ENCODE measurements at regions of chr2 and their contacts with region 1.

Region 1: DNA sequence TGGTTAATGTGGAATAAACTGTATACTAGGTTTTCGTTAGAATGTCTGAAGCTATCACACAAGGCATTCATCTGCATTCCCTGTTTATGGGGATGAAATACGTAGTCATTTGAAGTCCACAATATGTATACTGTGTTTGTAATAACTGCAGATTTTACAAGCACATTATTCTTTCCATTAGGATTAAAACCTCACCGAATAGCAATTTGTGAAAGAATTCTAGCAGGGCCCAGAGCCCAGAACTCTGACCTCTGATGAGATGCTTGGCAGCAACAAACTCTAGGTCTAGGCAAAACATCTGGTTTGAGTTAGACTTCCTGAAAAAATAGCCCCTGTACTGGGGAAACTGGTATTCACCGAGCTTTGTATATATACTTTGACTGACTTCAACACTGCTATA is 158.2 kb downstream of the SRBD1 start:
- DNase-seq: no peak
- ATAC-seq: no peak
- H3K4me3 ChIP-seq: no peak overlapping the region
- H3K27ac ChIP-seq: no peak overlapping the region
- H3K4me1 ChIP-seq: no peaks in the 10 kb centered on the region
- H3K27me3 ChIP-seq: no peaks in the 10 kb centered on the region
- CTCF ChIP-seq: no peak
- EP300 ChIP-seq: no peak
- POLR2A ChIP-seq: no peak
- RAD21 ChIP-seq: no peak

Region 2: DNA sequence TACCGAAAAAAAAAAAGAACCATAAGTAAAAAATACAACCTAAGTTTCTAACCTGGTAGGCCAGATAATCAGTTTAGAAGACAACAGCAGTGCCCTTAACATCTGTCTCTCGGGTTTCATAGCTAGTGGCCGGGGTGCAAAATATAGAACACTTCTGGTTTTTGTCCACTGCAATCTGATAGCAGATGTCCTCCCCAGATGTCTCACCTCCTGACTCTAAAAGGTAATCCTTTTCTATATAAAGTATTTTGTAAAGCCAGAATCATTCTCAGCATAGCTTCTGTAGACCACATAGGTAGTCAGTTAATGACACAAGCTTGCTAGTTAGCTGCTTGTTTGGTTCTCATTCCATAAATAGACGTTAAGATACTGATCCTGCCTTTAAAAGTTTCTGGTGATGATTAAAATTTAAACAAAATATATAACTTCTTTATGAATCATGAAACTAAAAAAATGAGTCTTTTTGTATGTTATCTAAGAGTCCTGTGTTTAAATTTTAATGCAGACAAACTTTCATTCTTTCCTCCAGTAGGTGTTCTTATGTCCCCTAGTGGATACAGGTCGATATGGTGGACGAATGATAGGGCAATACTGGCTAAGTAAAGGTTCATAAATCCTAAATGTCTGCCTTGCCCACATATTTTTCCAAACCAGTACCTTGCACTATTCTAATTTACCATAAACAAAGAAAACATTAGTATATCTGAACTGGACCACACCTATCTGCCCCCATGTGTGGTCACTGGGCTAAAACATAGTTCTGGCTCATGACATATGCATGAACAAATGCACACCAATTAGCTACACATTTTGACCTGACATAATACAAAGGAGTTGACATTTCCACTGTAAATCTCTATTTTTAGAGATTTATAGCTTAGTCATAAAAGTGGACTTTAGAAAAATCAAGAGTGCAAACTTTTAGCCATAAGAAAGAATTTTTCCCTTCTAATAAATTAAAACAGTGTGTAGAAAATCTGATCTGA is 12.8 kb before region 1 on chr2:
- CTCF ChIA-PET with region 1: interaction called, 5 read pairs
- POLR2A ChIA-PET with region 1: interaction called, 5 read pairs
- RAD21 ChIA-PET with region 1: interaction called, 3 read pairs
- SMC1A ChIA-PET with region 1: interaction called, 21 read pairs
- in situ Hi-C with region 1: no loop called
- intact Hi-C with region 1: no loop called
- DNase-seq: peak; percentile 12
- ATAC-seq: peak; percentile 87
- H3K4me3 ChIP-seq: no peak overlapping the region
- H3K27ac ChIP-seq: no peak overlapping the region
- H3K4me1 ChIP-seq: peaks cover 11% of the 10 kb centered on the region
- H3K27me3 ChIP-seq: no peaks in the 10 kb centered on the region
- CTCF ChIP-seq: peak in 2 of 3 experiments; percentile 5 to 18; a peak in 2 of 6 replicates
- EP300 ChIP-seq: no peak
- POLR2A ChIP-seq: no peak
- RAD21 ChIP-seq: peak; percentile 26; the same call in 1 of the 2 replicates

Measured in GM12878 (cell line).